ENCODE measurements at regions of chr3 and their contacts with region 1.

Region 1: DNA sequence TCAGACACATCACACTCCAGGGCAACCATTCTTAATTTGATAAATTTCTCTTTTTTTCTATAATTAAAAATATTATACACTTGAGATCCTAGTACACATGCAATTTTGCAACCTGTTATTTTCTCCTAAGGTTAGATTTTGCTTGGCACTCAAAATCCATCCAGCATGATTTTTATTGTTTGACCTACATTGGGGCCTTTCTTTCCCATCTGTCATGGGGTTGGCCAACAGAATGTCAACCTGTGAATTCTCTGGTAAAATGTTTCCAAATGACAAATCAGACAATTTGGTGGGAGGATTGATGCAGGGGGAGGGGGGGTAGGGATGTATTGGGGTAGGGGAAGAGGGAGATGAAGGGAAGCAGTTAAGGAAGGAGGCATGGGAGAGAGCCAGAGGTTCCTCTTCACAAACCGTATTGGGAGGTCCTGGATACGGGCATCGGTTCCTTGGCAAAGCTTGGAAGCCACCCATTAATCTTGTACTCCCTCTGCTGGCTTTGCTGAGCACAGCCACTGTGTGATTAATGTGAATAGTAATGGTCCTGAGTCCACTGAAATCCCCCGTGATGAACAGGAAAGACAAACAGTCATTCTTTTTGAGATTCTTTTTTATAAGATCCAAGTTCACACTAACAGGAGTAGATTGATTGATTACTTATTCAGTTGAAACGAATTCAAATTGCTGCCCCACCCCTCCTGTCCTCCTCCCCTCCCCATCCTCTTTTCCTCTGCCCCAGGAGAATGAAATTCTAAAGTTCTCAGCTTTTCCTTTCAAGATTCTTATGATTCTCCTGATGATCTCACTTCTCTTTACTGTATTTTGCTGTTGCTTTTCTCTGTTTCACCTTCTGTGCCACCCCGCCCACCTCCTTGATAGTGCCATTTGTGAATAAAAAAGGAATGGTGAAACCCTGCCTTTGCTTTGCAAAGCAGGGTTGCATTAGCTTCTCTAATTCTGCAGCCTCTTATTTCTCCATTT is 82.2 kb upstream of the SLC25A26 start:
- ATAC-seq: peak; percentile 79 to 95 (median 85)
- H3K4me3 ChIP-seq: no peak overlapping the region
- H3K27ac ChIP-seq: no peak overlapping the region
- H3K4me1 ChIP-seq: peaks cover 0 to 10% of the 10 kb centered on the region in 2 donors

Region 2: GRCh38 chr3:65785065-65785645 is 353.5 kb before region 1 on chr3:
- in situ Hi-C with region 1: loop called in 5 of 9 experiments (anchors 25 kb)
- ATAC-seq: peak in 4 of 8 experiments; percentile 11 to 47 (median 43)
- H3K4me3 ChIP-seq: no peak overlapping the region
- H3K27ac ChIP-seq: no peak overlapping the region
- H3K4me1 ChIP-seq: peaks cover 5 to 14% of the 10 kb centered on the region in 2 donors

Region 3: GRCh38 chr3:65914740-65915367 is 223.8 kb before region 1 on chr3:
- in situ Hi-C with region 1: loop called in 1 of 9 experiments (anchors 25 kb)
- ATAC-seq: peak in 3 of 8 experiments; percentile 50 to 80 (median 54)
- H3K4me3 ChIP-seq: no peak overlapping the region
- H3K27ac ChIP-seq: no peak overlapping the region
- H3K4me1 ChIP-seq: no peaks in the 10 kb centered on the region